Endothelial cell of umbilical vein (primary cell): ENCODE measurements at regions of chr9 and their contacts with region 1.

Region 1: GRCh38 chr9:107637421-107638420 is 148.2 kb upstream of the KLF4 start:
- DNase-seq: peak; percentile 99
- H3K4me3 ChIP-seq: peak overlapping the region; percentile 4 to 66 (median 36)
- H3K27ac ChIP-seq: peak overlapping the region; percentile 91
- H3K4me1 ChIP-seq: peaks cover 14% of the 10 kb centered on the region
- H3K27me3 ChIP-seq: no peaks in the 10 kb centered on the region
- CTCF ChIP-seq: peak; percentile 13 to 34
- POLR2A ChIP-seq: peak; percentile 80

Region 2: GRCh38 chr9:107548048-107548800 is 89.5 kb before region 1 on chr9:
- CTCF ChIA-PET with region 1: no interaction called
- POLR2A ChIA-PET with region 1: no interaction called
- dilution Hi-C with region 1: no loop called
- intact Hi-C with region 1: loop called (anchors 2 kb)
- DNase-seq: peak; percentile 80
- H3K4me3 ChIP-seq: peak overlapping the region in 2 of 3 experiments; percentile 10 to 24
- H3K27ac ChIP-seq: peak overlapping the region; percentile 74
- H3K4me1 ChIP-seq: peaks cover 16% of the 10 kb centered on the region
- H3K27me3 ChIP-seq: no peaks in the 10 kb centered on the region
- CTCF ChIP-seq: no peak
- POLR2A ChIP-seq: no peak

Region 3: GRCh38 chr9:107600060-107600573 is 37.6 kb before region 1 on chr9:
- CTCF ChIA-PET with region 1: interaction called, 3 read pairs
- POLR2A ChIA-PET with region 1: no interaction called
- dilution Hi-C with region 1: no loop called
- intact Hi-C with region 1: loop called (anchors 2 kb)
- DNase-seq: peak; percentile 71
- H3K4me3 ChIP-seq: no peak overlapping the region
- H3K27ac ChIP-seq: no peak overlapping the region
- H3K4me1 ChIP-seq: peaks cover 5% of the 10 kb centered on the region
- H3K27me3 ChIP-seq: no peaks in the 10 kb centered on the region
- CTCF ChIP-seq: no peak
- POLR2A ChIP-seq: no peak

Region 4: DNA sequence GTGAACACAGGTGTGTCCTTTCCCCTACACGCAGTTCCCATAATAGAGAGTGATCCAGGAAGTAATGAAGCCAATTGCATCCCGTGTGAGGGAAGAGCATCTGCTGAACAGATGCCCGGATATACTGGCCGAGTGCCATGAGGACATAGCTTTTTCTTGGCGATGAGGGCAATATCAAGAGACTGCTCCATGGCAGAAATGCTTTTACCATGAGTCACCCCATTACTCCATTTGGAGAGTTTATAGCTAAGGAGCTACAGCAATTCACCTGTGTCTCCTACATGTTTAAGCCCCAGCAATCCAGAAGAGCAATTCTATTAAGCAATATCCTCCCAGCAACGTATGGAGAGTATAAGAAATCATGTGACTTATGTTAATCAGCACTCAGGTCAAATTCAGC is 73.8 kb after region 1 on chr9:
- CTCF ChIA-PET with region 1: interaction called, 3 read pairs
- POLR2A ChIA-PET with region 1: interaction called, 3 read pairs
- dilution Hi-C with region 1: no loop called
- intact Hi-C with region 1: loop called (anchors 1 kb)
- DNase-seq: peak; percentile 80
- H3K4me3 ChIP-seq: no peak overlapping the region
- H3K27ac ChIP-seq: no peak overlapping the region
- H3K4me1 ChIP-seq: peaks cover 16% of the 10 kb centered on the region
- H3K27me3 ChIP-seq: peaks cover 14 to 26% of the 10 kb centered on the region in 2 experiments
- CTCF ChIP-seq: no peak
- POLR2A ChIP-seq: no peak

Region 5: DNA sequence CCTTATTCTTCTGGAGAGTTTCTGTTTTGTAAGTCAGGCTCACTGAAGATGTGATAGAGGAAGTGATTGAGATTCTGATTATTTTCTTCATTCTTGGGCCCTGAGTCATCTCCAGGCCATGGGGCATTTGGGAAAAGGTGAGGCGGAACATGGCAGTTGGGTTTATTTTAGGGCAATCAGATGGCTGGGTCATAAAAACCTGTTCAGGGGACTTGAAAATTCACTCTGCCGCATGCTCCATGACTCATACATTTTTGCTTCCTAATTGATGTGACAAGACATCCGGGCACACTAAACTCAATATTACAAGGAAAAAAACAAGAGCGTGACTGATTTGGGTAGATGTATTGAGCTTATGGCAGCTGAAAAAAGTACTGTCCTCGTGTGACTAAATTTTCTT is 117.6 kb after region 1 on chr9:
- CTCF ChIA-PET with region 1: no interaction called
- POLR2A ChIA-PET with region 1: interaction called, 7 read pairs
- dilution Hi-C with region 1: no loop called
- intact Hi-C with region 1: loop called (anchors 1 kb)
- DNase-seq: peak; percentile 87
- H3K4me3 ChIP-seq: no peak overlapping the region
- H3K27ac ChIP-seq: peak overlapping the region; percentile 68
- H3K4me1 ChIP-seq: peaks cover 45% of the 10 kb centered on the region
- H3K27me3 ChIP-seq: no peaks in the 10 kb centered on the region
- CTCF ChIP-seq: no peak
- POLR2A ChIP-seq: no peak

Region 6: GRCh38 chr9:107874591-107875369 is 237.1 kb after region 1 on chr9:
- CTCF ChIA-PET with region 1: no interaction called
- POLR2A ChIA-PET with region 1: no interaction called
- dilution Hi-C with region 1: no loop called
- intact Hi-C with region 1: no loop called
- DNase-seq: no peak
- H3K4me3 ChIP-seq: no peak overlapping the region
- H3K27ac ChIP-seq: no peak overlapping the region
- H3K4me1 ChIP-seq: no peaks in the 10 kb centered on the region
- H3K27me3 ChIP-seq: peaks cover 0 to 3% of the 10 kb centered on the region in 2 experiments
- CTCF ChIP-seq: no peak
- POLR2A ChIP-seq: no peak

Region 7: DNA sequence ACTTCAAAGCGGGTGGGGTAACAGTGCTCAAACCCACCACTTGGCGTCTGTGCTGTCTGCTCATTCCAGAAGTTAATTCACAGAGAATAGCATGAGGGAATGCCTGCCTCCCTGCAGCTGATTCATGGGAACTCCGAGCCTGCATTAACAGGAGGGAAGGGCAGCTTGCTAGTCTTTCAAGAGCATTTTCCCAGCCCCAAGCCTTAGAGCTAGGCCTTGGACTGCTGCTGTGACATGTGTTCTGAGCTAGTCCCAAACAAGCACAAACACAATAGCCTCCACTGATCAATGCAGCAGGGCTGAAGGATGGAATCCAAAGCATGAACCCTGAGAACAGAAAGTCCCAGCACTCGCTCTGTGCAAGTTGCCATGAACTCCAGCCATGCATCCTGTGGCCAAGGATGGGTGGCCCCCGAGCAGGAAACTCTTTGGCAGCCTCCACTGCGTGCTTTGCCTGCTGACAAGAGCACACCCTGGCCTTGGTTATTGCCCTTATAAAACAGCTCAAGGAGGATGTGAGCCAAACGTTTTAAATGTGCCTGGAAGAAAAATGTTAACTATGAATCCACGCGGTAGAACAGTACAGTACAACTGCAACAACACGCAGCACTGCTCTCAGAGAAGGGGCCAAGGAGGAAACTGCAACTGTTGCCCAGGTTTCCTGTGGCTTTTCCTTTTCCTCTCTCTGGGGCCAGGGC is 504.9 kb after region 1 on chr9:
- CTCF ChIA-PET with region 1: no interaction called
- POLR2A ChIA-PET with region 1: no interaction called
- dilution Hi-C with region 1: no loop called
- intact Hi-C with region 1: loop called (anchors 2 kb)
- DNase-seq: peak; percentile 89
- H3K4me3 ChIP-seq: no peak overlapping the region
- H3K27ac ChIP-seq: peak overlapping the region; percentile 19
- H3K4me1 ChIP-seq: peaks cover 20% of the 10 kb centered on the region
- H3K27me3 ChIP-seq: no peaks in the 10 kb centered on the region
- CTCF ChIP-seq: peak; percentile 3 to 26
- POLR2A ChIP-seq: no peak

Region 8: GRCh38 chr9:108272349-108272899 is 634.7 kb after region 1 on chr9:
- CTCF ChIA-PET with region 1: no interaction called
- POLR2A ChIA-PET with region 1: no interaction called
- dilution Hi-C with region 1: no loop called
- intact Hi-C with region 1: loop called (anchors 10 kb)
- DNase-seq: peak; percentile 29
- H3K4me3 ChIP-seq: no peak overlapping the region
- H3K27ac ChIP-seq: no peak overlapping the region
- H3K4me1 ChIP-seq: no peaks in the 10 kb centered on the region
- H3K27me3 ChIP-seq: no peaks in the 10 kb centered on the region
- CTCF ChIP-seq: peak; percentile 47 to 59
- POLR2A ChIP-seq: no peak